Activated B cell treated with CpG ODN at 0.5 μM for 24 hours (primary cell): ENCODE measurements at regions of chr13 and their contacts with region 1.

Region 1: DNA sequence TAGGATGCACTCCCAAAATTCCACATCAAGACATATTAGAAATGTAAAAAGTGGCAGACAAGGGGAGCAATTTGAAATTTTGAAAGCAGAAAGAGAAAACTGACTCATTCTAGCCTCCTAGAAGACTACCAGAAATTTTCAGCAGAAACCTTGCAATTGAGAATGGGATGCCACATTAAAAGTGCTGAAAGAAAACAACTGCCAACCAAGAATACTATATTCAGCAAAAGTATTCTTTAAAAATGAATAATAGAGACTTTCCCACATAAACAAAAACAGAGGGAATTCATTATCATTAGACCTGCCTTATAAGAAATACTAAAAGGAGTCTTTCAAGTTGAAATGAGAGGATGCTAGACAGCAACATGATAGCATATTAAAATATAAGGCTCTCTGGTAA is 78.3 kb upstream of the HTR2A start:
- DNase-seq: no peak
- ATAC-seq: no peak
- H3K4me3 Mint-ChIP-seq: no peak overlapping the region
- H3K27ac Mint-ChIP-seq: no peak overlapping the region
- H3K4me1 Mint-ChIP-seq: peaks cover 8% of the 10 kb centered on the region
- H3K27me3 Mint-ChIP-seq: no peaks in the 10 kb centered on the region
- CTCF ChIP-seq: no peak

Region 2: GRCh38 chr13:47459512-47459911 is 484.3 kb after region 1 on chr13:
- CTCF ChIA-PET with region 1: interaction called, 3 read pairs
- POLR2A ChIA-PET with region 1: no interaction called
- intact Hi-C with region 1: loop called (anchors 1 kb)
- DNase-seq: no peak
- ATAC-seq: no peak
- H3K4me3 Mint-ChIP-seq: no peak overlapping the region
- H3K27ac Mint-ChIP-seq: no peak overlapping the region
- H3K4me1 Mint-ChIP-seq: no peaks in the 10 kb centered on the region
- H3K27me3 Mint-ChIP-seq: no peaks in the 10 kb centered on the region
- CTCF ChIP-seq: no peak

Region 3: GRCh38 chr13:47794963-47795362 is 819.8 kb after region 1 on chr13:
- CTCF ChIA-PET with region 1: no interaction called
- POLR2A ChIA-PET with region 1: no interaction called
- intact Hi-C with region 1: no loop called
- DNase-seq: no peak
- ATAC-seq: no peak
- H3K4me3 Mint-ChIP-seq: no peak overlapping the region
- H3K27ac Mint-ChIP-seq: no peak overlapping the region
- H3K4me1 Mint-ChIP-seq: no peaks in the 10 kb centered on the region
- H3K27me3 Mint-ChIP-seq: no peaks in the 10 kb centered on the region
- CTCF ChIP-seq: no peak